Activated CD8-positive, alpha-beta memory T cell treated with anti-CD3 and anti-CD28 coated beads, Interleukin-2, amount 10 ng/mL, durations not matched to agents 7 days and 5 days (primary cell): ENCODE measurements at regions of chr4 and their contacts with region 1.

Region 1: DNA sequence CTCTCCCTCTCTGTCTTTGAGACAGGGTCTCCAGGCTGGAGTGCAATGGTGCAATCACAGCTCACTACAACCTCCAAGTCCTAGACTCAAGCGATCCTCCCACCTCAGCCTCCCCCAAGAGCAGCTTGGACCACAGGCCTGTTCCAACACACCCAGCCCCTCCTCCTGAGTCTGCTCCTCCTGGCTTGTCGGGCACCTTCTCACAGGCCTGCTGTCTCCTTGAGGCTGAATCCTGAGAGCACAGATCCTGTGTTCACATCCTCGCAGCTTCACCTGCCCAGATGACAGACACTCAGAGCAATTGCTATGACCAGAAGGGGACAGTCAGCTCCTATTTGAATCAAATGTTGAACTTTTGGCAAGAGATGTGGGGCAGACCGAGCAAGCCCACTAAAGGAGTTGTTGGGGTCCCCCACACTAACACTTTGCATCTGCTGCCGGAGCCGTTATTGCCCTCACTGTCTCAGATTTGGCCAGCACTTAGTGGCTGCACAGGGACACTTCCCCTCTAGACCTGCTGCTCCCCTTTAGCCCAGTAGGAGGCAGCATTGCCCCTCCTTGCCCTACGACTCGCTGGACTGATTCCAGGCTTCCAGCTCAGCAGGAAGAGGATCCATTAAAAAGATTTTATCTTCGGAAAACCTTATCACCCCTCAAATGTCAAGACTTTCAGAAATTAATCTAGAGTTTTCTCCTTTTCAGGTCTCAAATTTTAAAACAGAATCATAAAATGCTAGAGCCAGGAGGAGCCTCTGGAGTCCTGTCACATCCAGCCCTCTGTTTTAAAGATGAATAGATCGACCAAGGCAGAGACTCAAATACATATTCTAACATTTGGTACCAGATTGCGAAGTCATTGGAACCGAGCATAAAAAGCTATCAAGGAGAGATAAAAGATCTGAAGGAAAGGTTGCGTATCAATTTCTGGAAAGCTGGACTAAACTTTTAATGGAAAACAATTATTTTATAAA is 113.7 kb downstream of the USP46 start:
- DNase-seq: peak; percentile 62
- ATAC-seq: peak; percentile 58
- H3K4me3 Mint-ChIP-seq: no peak overlapping the region
- H3K27ac Mint-ChIP-seq: no peak overlapping the region
- H3K4me1 Mint-ChIP-seq: no peaks in the 10 kb centered on the region
- H3K27me3 Mint-ChIP-seq: peaks cover 12% of the 10 kb centered on the region

Region 2: DNA sequence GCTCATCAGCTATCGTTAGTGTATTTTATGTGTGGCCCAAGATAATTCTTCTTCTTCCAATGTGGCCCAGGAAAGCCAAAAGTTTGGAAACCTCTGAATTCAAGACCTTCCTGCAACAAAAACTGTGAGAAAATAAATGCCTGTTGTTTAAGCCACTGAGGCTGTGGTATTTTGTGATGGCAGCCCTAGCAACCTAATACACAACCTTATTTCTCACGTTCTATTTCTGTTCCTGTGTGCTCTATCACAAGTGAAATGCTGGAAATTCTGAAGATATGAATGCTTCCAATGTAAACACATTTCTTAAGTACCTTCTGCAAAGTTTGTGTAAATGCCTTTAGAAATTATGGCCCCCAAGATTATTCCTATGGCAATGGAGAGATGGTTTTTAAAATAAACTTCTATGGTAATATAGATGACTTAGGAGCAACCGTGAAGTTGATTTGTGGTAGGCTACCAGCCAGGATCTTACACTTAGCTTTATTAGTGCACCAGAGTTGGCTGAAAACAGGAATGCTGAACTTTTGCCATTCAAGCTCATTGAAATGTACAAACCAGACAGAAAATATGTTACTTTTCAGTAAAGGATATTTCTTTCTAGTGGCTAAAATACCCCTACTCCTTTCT is 34.3 kb before region 1 on chr4:
- CTCF ChIA-PET with region 1: no interaction called
- DNase-seq: no peak
- ATAC-seq: no peak
- H3K4me3 Mint-ChIP-seq: no peak overlapping the region
- H3K27ac Mint-ChIP-seq: no peak overlapping the region
- H3K4me1 Mint-ChIP-seq: no peaks in the 10 kb centered on the region
- H3K27me3 Mint-ChIP-seq: peaks cover 3% of the 10 kb centered on the region

Region 3: GRCh38 chr4:52665592-52665991 is 120.2 kb after region 1 on chr4:
- CTCF ChIA-PET with region 1: interaction called, 18 read pairs
- DNase-seq: no peak
- ATAC-seq: peak; percentile 81
- H3K4me3 Mint-ChIP-seq: no peak overlapping the region
- H3K27ac Mint-ChIP-seq: no peak overlapping the region
- H3K4me1 Mint-ChIP-seq: peaks cover 3% of the 10 kb centered on the region
- H3K27me3 Mint-ChIP-seq: peaks cover 7% of the 10 kb centered on the region

Region 4: DNA sequence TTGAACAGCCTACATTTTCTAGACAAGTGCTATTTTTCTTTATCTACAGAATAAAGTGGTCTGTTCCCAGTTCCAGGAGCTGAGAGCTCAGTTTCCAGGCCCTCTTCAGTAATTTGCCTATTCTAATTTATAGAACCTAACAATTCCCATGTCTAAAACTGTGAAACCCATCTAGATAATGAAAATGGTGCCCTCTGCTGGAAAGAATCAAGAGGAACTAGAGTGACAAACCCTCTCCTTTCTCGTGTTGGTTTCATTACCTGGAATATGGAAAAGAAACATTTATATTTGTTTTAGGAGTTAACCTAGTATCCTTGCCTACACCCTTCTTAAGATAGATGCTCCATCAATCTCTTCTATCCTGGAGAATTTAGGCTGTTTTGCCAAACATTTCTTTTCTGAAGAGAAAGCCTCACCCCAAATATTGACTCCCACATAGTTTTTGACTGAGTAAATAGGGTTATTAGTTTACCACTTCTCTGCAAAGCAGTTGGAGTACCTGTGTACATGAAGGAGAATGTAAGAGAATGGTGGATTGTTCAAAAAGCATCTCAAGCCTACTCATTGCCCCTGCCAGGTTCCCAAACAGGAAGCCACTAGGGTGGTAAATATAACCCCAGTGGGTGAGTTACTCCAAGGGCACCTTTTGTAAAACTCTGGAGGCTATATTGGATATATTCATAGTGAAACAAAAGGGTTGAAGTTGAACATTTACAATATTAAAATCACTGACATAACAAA is 438.3 kb after region 1 on chr4:
- CTCF ChIA-PET with region 1: interaction called, 21 read pairs
- DNase-seq: no peak
- ATAC-seq: peak; percentile 69
- H3K4me3 Mint-ChIP-seq: no peak overlapping the region
- H3K27ac Mint-ChIP-seq: no peak overlapping the region
- H3K4me1 Mint-ChIP-seq: peaks cover 7% of the 10 kb centered on the region
- H3K27me3 Mint-ChIP-seq: no peaks in the 10 kb centered on the region